A673 (cell line): ENCODE measurements at regions of chr21 and their contacts with region 1.

Region 1: GRCh38 chr21:29718081-29718815 is 221.5 kb downstream of the GRIK1 start:
- DNase-seq: no peak
- H3K4me3 ChIP-seq: no peak overlapping the region
- H3K27ac ChIP-seq: no peak overlapping the region
- H3K4me1 ChIP-seq: peaks cover 43% of the 10 kb centered on the region
- H3K27me3 ChIP-seq: no peaks in the 10 kb centered on the region
- CTCF ChIP-seq: no peak

Region 2: DNA sequence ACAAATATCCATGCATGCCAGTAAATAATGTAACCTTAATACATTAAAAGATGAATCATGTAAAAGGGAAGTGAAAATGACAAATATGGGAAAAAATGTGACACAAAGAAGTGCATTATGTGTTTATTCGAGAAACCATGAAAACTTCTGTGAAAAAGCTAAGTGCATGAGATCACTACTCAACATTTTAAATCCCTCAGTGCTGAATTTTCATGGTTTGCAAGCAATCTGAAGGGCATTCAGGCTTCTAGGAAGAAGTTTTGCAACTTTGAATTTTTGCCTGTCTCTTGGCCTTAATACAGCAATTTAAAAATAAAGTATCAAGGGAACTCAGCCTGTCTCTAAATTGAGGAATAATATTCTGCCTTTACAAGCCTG is 509.6 kb before region 1 on chr21:
- CTCF ChIA-PET with region 1: no interaction called
- POLR2A ChIA-PET with region 1: no interaction called
- intact Hi-C with region 1: loop called (anchors 10 kb)
- DNase-seq: peak; percentile 91
- H3K4me3 ChIP-seq: peak overlapping the region; percentile 19
- H3K27ac ChIP-seq: peak overlapping the region; percentile 96
- H3K4me1 ChIP-seq: peaks cover 49% of the 10 kb centered on the region
- H3K27me3 ChIP-seq: no peaks in the 10 kb centered on the region
- CTCF ChIP-seq: no peak

Region 3: GRCh38 chr21:29538115-29538514 is 180.1 kb before region 1 on chr21:
- CTCF ChIA-PET with region 1: no interaction called
- POLR2A ChIA-PET with region 1: no interaction called
- intact Hi-C with region 1: no loop called
- DNase-seq: no peak
- H3K4me3 ChIP-seq: no peak overlapping the region
- H3K27ac ChIP-seq: no peak overlapping the region
- H3K4me1 ChIP-seq: no peaks in the 10 kb centered on the region
- H3K27me3 ChIP-seq: no peaks in the 10 kb centered on the region
- CTCF ChIP-seq: no peak

Region 4: GRCh38 chr21:29697555-29698193 is 20.6 kb before region 1 on chr21:
- CTCF ChIA-PET with region 1: no interaction called
- POLR2A ChIA-PET with region 1: no interaction called
- intact Hi-C with region 1: no loop called
- DNase-seq: peak; percentile 30
- H3K4me3 ChIP-seq: no peak overlapping the region
- H3K27ac ChIP-seq: no peak overlapping the region
- H3K4me1 ChIP-seq: peaks cover 5% of the 10 kb centered on the region
- H3K27me3 ChIP-seq: no peaks in the 10 kb centered on the region
- CTCF ChIP-seq: no peak